ENCODE measurements at regions of chr1 and their contacts with region 1.

Region 1: GRCh38 chr1:46413596-46413985 is 19.5 kb downstream of the FAAH start:
- DNase-seq: no peak
- H3K4me3 ChIP-seq: no peak overlapping the region
- H3K27ac ChIP-seq: no peak overlapping the region
- H3K4me1 ChIP-seq: no peaks in the 10 kb centered on the region
- H3K27me3 ChIP-seq: no peaks in the 10 kb centered on the region
- CTCF ChIP-seq: no peak
- POLR2A ChIP-seq: no peak

Region 2: DNA sequence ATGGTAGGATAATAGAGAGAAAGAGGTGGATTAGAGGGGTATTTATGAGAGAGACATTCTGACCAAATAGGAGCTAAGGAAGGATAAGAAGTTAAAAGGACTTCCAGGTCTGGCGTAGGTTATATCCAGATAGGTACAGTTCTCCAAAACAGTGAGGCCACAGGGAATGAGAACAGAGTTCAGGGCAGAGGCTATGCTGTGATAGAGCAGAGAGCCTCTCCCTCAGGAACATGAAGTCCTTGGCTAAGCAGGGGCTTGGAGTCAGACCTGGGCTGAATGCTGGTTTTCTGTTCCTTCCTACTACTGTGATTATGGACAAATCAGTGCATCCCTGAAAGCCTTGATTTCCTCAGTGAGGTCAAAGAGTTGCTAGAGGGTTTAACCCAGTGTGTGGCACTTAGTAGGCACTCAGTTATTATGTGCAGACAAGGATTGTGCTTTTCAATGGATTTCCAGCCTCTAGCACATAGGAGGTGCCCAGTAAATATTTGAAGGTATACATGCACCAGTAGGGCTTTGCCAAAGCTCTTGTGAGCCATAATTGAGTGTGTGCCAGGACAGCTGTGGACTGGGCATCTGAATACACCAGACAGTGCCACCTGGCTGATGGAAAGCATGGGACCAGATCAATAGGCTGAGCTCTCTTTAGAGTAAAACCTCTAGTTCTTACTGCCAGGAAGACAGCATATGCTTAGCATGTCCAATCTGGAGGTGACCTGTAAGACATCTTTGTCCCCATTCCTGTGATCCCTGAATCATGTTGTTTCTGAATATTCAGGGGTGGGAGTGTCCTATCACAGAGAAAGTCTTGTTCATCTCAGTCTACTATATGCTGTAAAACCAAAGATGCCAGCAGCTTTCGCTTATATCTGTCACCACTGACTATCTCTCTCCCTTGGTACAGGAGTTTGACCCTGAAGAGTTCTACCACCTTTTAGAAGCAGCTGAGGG is 392.3 kb before region 1 on chr1:
- intact Hi-C with region 1: no loop called
- DNase-seq: no peak
- H3K4me3 ChIP-seq: no peak overlapping the region
- H3K27ac ChIP-seq: no peak overlapping the region
- H3K4me1 ChIP-seq: no peaks in the 10 kb centered on the region
- H3K27me3 ChIP-seq: no peaks in the 10 kb centered on the region
- CTCF ChIP-seq: no peak
- POLR2A ChIP-seq: no peak

Region 3: DNA sequence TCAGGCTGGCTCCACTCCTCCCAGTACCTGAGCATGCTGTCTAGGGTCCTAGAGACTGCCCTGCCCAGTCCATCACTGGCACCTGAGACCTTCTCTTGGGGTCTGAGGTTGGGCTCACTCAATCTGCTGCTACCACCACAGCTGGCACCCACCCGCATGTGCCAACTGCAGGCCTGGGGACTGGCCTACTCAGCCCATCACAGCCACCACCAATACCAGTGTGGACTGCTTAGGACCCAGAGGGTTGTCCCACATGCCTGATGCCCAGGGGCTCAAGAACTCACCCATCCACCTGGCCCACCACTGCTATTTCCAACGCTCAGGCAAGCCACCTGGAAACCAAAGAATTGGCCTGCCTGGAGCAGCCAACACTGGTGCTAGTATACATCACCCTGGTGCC is 448.8 kb after region 1 on chr1:
- intact Hi-C with region 1: loop called (anchors 5 kb)
- DNase-seq: no peak
- H3K4me3 ChIP-seq: no peak overlapping the region
- H3K27ac ChIP-seq: no peak overlapping the region
- H3K4me1 ChIP-seq: no peaks in the 10 kb centered on the region
- H3K27me3 ChIP-seq: no peaks in the 10 kb centered on the region
- CTCF ChIP-seq: no peak
- POLR2A ChIP-seq: no peak